K562 (cell line): ENCODE measurements at regions of chr22 and their contacts with region 1.

Region 1: DNA sequence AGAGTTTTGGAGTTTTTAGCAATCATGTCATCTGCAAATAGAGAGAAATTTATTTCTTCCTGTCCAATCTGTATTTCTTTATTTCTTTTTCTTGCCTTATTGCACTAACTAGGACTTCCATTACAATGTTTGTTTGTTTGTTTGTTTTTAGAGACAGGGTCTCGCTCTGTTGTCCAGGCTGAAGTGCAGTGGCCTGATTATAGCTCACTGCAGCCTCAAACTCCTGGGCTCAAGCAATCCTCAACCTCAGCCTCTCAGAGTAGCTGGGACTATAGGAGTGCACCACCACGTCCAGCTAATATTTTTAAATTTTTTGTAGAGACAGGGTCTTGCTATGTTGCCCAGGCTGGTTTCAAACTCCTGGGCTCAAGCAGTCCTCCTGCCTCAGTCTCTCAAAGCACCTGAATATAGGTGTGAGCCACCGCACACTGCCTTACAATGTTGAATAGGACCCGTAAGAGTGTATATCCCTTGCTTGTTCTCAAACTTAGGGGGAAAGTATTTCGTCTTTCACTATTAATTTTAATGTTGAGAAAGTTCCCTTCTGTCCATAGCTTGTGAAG is 29.6 kb upstream of the MAPK1 start:
- DNase-seq: no peak
- ATAC-seq: no peak
- H3K4me3 ChIP-seq: no peak overlapping the region
- H3K27ac ChIP-seq: no peak overlapping the region
- H3K4me1 ChIP-seq: no peaks in the 10 kb centered on the region
- H3K27me3 ChIP-seq: peaks cover 15 to 41% of the 10 kb centered on the region in 2 experiments; a peak in 3 of 5 replicates
- CTCF ChIP-seq: no peak
- EP300 ChIP-seq: no peak
- POLR2A ChIP-seq: no peak
- RAD21 ChIP-seq: no peak

Region 2: DNA sequence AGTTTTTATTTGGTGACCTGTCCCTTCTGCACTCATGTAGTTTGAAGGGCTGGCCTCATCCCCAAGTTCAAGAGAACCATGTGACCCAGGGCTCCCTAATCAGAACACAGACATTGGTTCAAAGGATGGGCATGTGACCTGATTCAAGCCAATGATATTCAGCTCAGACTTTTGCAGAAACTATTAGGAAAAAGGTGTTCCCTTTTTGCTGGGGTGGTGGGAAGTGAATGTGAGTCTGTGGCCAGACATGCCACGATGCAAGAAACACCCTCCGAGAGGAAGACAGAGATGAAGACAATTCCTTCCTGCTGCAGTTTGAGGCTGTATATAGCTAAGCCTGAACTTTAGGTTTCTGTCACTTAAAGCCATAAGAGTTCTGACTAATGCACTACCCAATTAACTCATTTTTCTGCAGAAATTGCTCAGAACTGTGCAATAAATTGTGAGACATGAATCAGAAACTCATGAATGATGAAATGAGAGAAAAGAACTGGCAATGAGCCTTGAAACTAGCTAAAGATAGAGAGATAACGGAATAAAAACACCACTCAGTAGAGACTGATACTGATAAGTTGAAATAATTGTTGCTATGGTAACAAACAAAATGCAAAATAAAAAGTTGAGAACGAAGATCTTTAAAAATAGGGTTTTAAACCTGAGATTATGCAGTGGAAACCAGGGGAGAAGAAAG is 20.4 kb before region 1 on chr22:
- CTCF ChIA-PET with region 1: no interaction called
- POLR2A ChIA-PET with region 1: interaction called, 31 read pairs
- in situ Hi-C with region 1: no loop called
- intact Hi-C with region 1: no loop called
- DNase-seq: peak; percentile 75 to 82 (median 78)
- ATAC-seq: peak; percentile 86
- H3K4me3 ChIP-seq: no peak overlapping the region
- H3K27ac ChIP-seq: no peak overlapping the region
- H3K4me1 ChIP-seq: peaks cover 9 to 13% of the 10 kb centered on the region in 2 experiments
- H3K27me3 ChIP-seq: peaks cover 1 to 20% of the 10 kb centered on the region in 2 experiments; a peak in 3 of 5 replicates
- CTCF ChIP-seq: no peak
- EP300 ChIP-seq: peak; percentile 89
- POLR2A ChIP-seq: no peak
- RAD21 ChIP-seq: no peak

Region 3: GRCh38 chr22:21881841-21882753 is 14.9 kb before region 1 on chr22:
- CTCF ChIA-PET with region 1: no interaction called
- POLR2A ChIA-PET with region 1: interaction called, 31 read pairs
- in situ Hi-C with region 1: no loop called
- intact Hi-C with region 1: no loop called
- DNase-seq: peak in 3 of 4 experiments; percentile 41 to 52 (median 46)
- ATAC-seq: peak; percentile 40
- H3K4me3 ChIP-seq: no peak overlapping the region
- H3K27ac ChIP-seq: no peak overlapping the region
- H3K4me1 ChIP-seq: peaks cover 4 to 10% of the 10 kb centered on the region in 2 experiments
- H3K27me3 ChIP-seq: peaks cover 4 to 25% of the 10 kb centered on the region in 2 experiments; a peak in 4 of 5 replicates
- CTCF ChIP-seq: no peak
- EP300 ChIP-seq: no peak
- POLR2A ChIP-seq: no peak
- RAD21 ChIP-seq: no peak

Region 4: GRCh38 chr22:21907638-21908522 is 10.8 kb after region 1 on chr22:
- CTCF ChIA-PET with region 1: no interaction called
- POLR2A ChIA-PET with region 1: interaction called, 1,041 read pairs
- in situ Hi-C with region 1: no loop called
- intact Hi-C with region 1: no loop called
- DNase-seq: peak in 2 of 4 experiments; percentile 49 to 57
- ATAC-seq: no peak
- H3K4me3 ChIP-seq: no peak overlapping the region
- H3K27ac ChIP-seq: no peak overlapping the region
- H3K4me1 ChIP-seq: peaks cover 0 to 16% of the 10 kb centered on the region in 2 experiments; a peak in 4 of 5 replicates
- H3K27me3 ChIP-seq: peaks cover 7 to 14% of the 10 kb centered on the region in 2 experiments; a peak in 4 of 5 replicates
- CTCF ChIP-seq: 0 out of 6 replicates have a peak, but pooled peaks of 1 of the 3 experiments have one; percentile 8
- EP300 ChIP-seq: no peak
- POLR2A ChIP-seq: no peak
- RAD21 ChIP-seq: no peak

Region 5: GRCh38 chr22:22009661-22010060 is 112.6 kb after region 1 on chr22:
- CTCF ChIA-PET with region 1: no interaction called
- POLR2A ChIA-PET with region 1: no interaction called
- in situ Hi-C with region 1: no loop called
- intact Hi-C with region 1: no loop called
- DNase-seq: no peak
- ATAC-seq: peak; percentile 4; the same call in 2 of the 3 replicates
- H3K4me3 ChIP-seq: no peak overlapping the region
- H3K27ac ChIP-seq: no peak overlapping the region
- H3K4me1 ChIP-seq: no peaks in the 10 kb centered on the region
- H3K27me3 ChIP-seq: peaks cover 33 to 57% of the 10 kb centered on the region in 2 experiments
- CTCF ChIP-seq: no peak
- EP300 ChIP-seq: no peak
- POLR2A ChIP-seq: no peak
- RAD21 ChIP-seq: no peak